ENCODE measurements at regions of chr3 and their contacts with region 1.

Region 1: GRCh38 chr3:43621656-43622432 is at the start of gene ANO10:
- DNase-seq: peak; percentile 98 to 99
- ATAC-seq: peak; percentile 98
- H3K4me3 ChIP-seq: peak within 1 kb of the TSS; percentile 78 to 96 (median 90)
- H3K27ac ChIP-seq: peak within 1 kb of the TSS; percentile 82 to 90 (median 82)
- H3K4me1 ChIP-seq: peaks cover 14% of the 10 kb centered on the region in 2 donors
- H3K27me3 ChIP-seq: no peaks in the 10 kb centered on the region
- CTCF ChIP-seq: no peak
- POLR2A ChIP-seq: peak; percentile 62 to 83
- total RNA-seq, gene ANO10: 6.9 to 8.1 (median 7.8) TPM

Region 2: GRCh38 chr3:43001094-43001553 is 620.7 kb before region 1 on chr3:
- in situ Hi-C with region 1: no loop called
- intact Hi-C with region 1: loop called (anchors 5 kb)
- DNase-seq: peak; percentile 89 to 94
- ATAC-seq: peak; percentile 92 to 93
- H3K4me3 ChIP-seq: peak overlapping the region in 3 of 4 donors; percentile 16 to 41 (median 27)
- H3K27ac ChIP-seq: peak overlapping the region; percentile 73 to 81 (median 80)
- H3K4me1 ChIP-seq: peaks cover 41 to 47% of the 10 kb centered on the region in 2 donors
- H3K27me3 ChIP-seq: no peaks in the 10 kb centered on the region
- CTCF ChIP-seq: no peak
- POLR2A ChIP-seq: no peak

Region 3: GRCh38 chr3:43162230-43163084 is 459.4 kb before region 1 on chr3:
- in situ Hi-C with region 1: no loop called
- intact Hi-C with region 1: no loop called
- DNase-seq: no peak
- ATAC-seq: no peak
- H3K4me3 ChIP-seq: no peak overlapping the region
- H3K27ac ChIP-seq: peak overlapping the region in 3 of 4 donors; percentile 6 to 43 (median 36)
- H3K4me1 ChIP-seq: peaks cover 0 to 7% of the 10 kb centered on the region in 2 donors
- H3K27me3 ChIP-seq: no peaks in the 10 kb centered on the region
- CTCF ChIP-seq: peak in 3 of 5 experiments; percentile 20 to 43 (median 35)
- POLR2A ChIP-seq: no peak

Region 4: GRCh38 chr3:43584043-43584826 is 37.6 kb before region 1 on chr3:
- in situ Hi-C with region 1: no loop called
- intact Hi-C with region 1: no loop called
- DNase-seq: no peak
- ATAC-seq: no peak
- H3K4me3 ChIP-seq: no peak overlapping the region
- H3K27ac ChIP-seq: no peak overlapping the region
- H3K4me1 ChIP-seq: peaks cover 9 to 11% of the 10 kb centered on the region in 2 donors
- H3K27me3 ChIP-seq: no peaks in the 10 kb centered on the region
- CTCF ChIP-seq: no peak
- POLR2A ChIP-seq: no peak

Region 5: DNA sequence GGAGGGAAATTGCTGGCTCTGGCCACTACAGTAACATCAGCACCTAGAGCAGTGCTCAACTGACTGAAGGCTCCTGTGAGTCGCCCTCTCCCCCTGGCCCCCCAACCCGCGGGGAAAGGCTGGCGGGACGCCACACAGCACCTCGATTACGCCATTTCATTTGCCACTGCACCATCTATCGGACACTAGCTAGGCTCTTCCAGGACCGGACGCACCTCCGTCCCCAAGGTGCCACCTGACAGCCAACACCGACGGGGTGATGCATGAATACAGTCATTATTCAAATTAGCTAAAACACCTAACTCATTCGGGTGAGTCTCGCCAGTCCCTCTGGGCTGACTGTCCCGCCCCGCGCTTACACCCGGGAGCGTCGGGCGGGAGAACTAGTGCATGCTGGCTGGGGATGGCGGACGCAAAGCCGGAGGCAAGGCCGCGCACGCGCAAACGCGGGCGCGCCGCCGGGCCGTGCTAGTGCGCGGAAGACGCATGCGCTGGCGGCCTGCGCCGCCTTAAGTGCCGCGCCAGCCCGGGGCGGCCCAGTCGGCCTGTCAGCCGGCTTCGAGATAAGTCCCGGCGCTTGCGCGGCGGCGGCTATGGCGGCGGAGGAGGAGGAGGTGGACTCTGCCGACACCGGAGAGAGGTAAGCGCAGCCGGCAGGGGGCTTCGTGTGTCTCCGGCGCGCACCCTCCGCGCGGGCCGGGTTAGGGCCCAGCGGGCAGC is 68.7 kb after region 1 on chr3 and contains the start of gene ABHD5:
- in situ Hi-C with region 1: loop called in 2 of 4 experiments (anchors 5 kb)
- intact Hi-C with region 1: loop called (anchors 1 kb)
- DNase-seq: peak; percentile 68 to 85
- ATAC-seq: peak; percentile 91
- H3K4me3 ChIP-seq: peak within 1 kb of the TSS; percentile 66 to 93 (median 76)
- H3K27ac ChIP-seq: peak within 1 kb of the TSS; percentile 82 to 95 (median 90)
- H3K4me1 ChIP-seq: peaks cover 23 to 28% of the 10 kb centered on the region in 2 donors
- H3K27me3 ChIP-seq: no peaks in the 10 kb centered on the region
- CTCF ChIP-seq: peak in 4 of 5 experiments; percentile 5 to 29 (median 19)
- POLR2A ChIP-seq: peak; percentile 98
- total RNA-seq, gene ABHD5: 18.6 to 43.7 (median 33.7) TPM

Region 6: GRCh38 chr3:43707998-43708397 is 86.2 kb after region 1 on chr3:
- in situ Hi-C with region 1: no loop called
- intact Hi-C with region 1: loop called (anchors 5 kb)
- DNase-seq: no peak
- ATAC-seq: peak in 1 of 2 donors; percentile 37
- H3K4me3 ChIP-seq: no peak overlapping the region
- H3K27ac ChIP-seq: peak overlapping the region in 2 of 4 donors; percentile 3 to 38
- H3K4me1 ChIP-seq: peaks cover 0 to 4% of the 10 kb centered on the region in 2 donors
- H3K27me3 ChIP-seq: no peaks in the 10 kb centered on the region
- CTCF ChIP-seq: no peak
- POLR2A ChIP-seq: no peak

Measured in gastrocnemius medialis (tissue), 4 donors.